ENCODE measurements at regions of chr20 and their contacts with region 1.

Region 1: DNA sequence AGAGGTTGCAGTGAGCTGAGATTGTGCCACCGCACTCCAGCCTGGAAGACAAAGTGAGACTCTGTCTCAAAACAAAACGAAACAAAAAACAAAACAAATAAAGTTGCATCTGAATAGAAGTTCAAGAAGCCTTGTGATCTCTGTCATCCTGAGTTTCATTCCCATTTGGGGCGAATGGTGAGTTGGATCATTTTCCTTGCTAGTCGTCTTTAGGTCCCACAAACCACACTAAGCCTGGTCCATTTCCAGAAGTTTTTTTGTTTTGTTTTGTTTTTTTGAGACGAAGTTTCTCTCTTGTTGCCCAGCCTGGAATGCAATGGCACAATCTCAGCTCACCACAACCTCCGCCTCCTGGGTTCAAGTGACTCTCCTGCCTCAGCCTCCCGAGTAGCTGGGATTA is 33.8 kb downstream of the ZNF217 start:
- DNase-seq: no peak
- ATAC-seq: no peak
- H3K4me3 ChIP-seq: no peak overlapping the region
- H3K4me3 Mint-ChIP-seq: no peak overlapping the region
- H3K27ac ChIP-seq: no peak overlapping the region
- H3K27ac Mint-ChIP-seq: no peak overlapping the region
- H3K4me1 ChIP-seq: peaks cover 0 to 4% of the 10 kb centered on the region in 2 experiments
- H3K4me1 Mint-ChIP-seq: peaks cover 0 to 3% (median 0%) of the 10 kb centered on the region in 3 donors
- H3K27me3 ChIP-seq: no peaks in the 10 kb centered on the region
- H3K27me3 Mint-ChIP-seq: no peaks in the 10 kb centered on the region

Region 2: GRCh38 chr20:53571358-53572284 is 11.8 kb after region 1 on chr20:
- CTCF ChIA-PET with region 1: no interaction called
- POLR2A ChIA-PET with region 1: interaction called, 7 to 12 read pairs
- DNase-seq: no peak
- ATAC-seq: no peak
- H3K4me3 ChIP-seq: no peak overlapping the region
- H3K4me3 Mint-ChIP-seq: peak overlapping the region in 1 of 3 donors; percentile 41
- H3K27ac ChIP-seq: no peak overlapping the region
- H3K27ac Mint-ChIP-seq: peak overlapping the region; percentile 49 to 75
- H3K4me1 ChIP-seq: peaks cover 0 to 48% of the 10 kb centered on the region in 2 experiments
- H3K4me1 Mint-ChIP-seq: peaks cover 54 to 77% (median 70%) of the 10 kb centered on the region in 3 donors
- H3K27me3 ChIP-seq: no peaks in the 10 kb centered on the region
- H3K27me3 Mint-ChIP-seq: no peaks in the 10 kb centered on the region